ENCODE measurements at regions of chr10 and their contacts with region 1.

Region 1: DNA sequence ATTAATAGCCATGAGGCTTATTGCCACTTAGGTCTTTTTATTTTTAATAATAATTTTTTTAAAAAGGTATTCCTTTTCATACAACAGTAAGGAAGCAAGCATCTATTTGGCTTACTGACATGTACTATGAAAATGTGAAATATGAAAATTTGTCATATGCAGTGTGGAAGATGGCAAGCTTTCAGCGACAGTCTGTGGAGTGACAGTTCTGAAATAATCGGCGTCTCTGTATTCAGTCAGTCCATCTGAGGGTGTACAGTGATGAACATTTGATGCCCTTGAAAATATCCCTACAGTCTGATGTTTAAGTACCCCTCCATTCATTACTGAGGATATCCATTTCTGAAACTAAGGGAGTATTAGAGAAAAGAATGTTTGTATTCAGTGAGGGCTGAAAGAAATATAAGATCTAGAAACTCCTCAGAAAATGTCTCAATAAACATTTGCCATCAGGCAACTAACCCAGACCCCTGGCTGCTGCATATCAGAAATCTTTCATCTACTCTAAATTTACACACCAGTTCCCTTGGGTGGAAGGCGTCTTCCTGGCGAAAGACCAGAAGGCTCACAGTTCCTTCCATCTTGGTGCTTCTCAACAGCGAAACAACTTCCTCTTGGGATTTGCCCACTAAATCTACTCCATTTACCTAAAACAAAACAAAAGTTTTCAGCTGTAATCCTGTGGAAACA is 440.6 kb downstream of the PARD3 start:
- DNase-seq: no peak
- H3K4me3 ChIP-seq: no peak overlapping the region
- CTCF ChIP-seq: no peak

Region 2: GRCh38 chr10:34193931-34194626 is 180.4 kb before region 1 on chr10:
- in situ Hi-C with region 1: no loop called
- DNase-seq: peak; percentile 56
- H3K4me3 ChIP-seq: no peak overlapping the region
- CTCF ChIP-seq: no peak

Region 3: GRCh38 chr10:34262985-34263384 is 111.5 kb before region 1 on chr10:
- in situ Hi-C with region 1: no loop called
- DNase-seq: no peak
- H3K4me3 ChIP-seq: no peak overlapping the region
- CTCF ChIP-seq: peak; percentile 38

Region 4: DNA sequence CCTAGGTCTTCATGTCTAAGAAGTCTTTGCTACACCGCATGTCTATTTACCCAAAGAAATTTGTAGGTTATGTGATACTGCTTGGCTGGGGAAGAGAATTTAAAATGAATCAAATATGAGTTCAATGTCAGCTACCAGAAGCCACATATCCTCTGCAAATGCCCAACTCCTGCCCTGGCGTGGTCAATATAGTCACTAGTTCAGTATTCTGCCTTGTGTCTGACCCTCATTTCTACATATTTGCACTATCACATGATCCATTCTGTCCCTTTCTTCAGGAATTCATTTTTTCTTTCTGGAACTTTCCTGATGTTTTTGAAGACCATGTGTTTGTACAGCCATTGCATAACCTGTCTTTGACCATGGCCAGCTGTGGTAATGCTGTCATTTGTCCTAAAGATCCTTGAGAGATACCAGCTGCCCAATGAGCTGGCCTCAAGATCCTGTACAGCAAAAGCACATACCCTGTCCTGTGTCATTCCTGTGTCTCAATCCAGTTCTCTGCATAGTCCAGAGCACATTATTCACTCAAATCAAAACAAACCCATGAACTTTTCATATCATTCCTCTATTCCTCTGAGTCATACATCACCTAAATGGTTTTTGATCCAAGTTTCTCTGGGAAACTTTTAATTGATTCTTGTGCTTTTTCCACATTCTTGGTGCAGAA is 84.0 kb before region 1 on chr10:
- in situ Hi-C with region 1: loop called (anchors 5 kb)
- DNase-seq: peak; percentile 32
- H3K4me3 ChIP-seq: no peak overlapping the region
- CTCF ChIP-seq: no peak

Region 5: DNA sequence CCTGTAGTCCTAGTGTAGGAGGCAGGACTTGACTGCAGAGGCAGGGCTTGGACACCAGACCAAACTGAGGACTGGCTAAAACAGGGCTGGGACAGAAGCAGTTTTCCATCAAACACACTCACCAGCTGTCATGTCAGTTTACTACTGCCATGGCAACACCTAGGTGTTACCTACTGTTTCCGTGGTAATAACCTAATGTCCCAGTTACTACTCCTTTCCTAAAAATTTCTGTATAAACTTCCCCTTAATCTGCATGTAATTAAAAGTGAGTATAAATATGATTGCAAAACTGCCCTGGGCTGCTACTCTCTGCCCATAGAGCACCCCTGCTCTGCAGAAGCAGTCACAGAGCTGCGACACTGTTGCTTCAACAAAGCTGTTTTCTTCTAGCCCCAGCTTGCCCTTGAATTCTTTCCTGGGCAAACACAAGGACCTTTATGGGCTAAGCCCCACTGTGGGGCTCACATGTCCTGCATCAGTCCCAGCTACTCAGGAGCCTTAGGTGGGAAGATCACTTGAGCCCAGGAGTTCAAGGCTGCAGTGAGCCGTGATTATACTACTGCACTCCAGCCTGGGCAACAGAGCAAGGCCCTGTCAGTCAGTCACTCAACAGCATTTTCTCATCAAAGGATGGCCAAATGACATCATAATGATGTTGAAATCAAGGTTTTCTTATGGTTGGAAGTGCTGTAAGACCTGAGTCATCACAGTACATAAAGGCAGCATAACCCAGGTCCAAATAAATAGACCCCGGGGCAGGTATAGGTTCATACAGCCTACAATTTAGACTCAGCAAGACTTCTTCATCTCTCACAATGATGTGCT is 99.3 kb after region 1 on chr10:
- in situ Hi-C with region 1: no loop called
- DNase-seq: no peak
- H3K4me3 ChIP-seq: no peak overlapping the region
- CTCF ChIP-seq: no peak

Region 6: GRCh38 chr10:34599026-34599795 is 224.7 kb after region 1 on chr10:
- in situ Hi-C with region 1: no loop called
- DNase-seq: no peak
- H3K4me3 ChIP-seq: no peak overlapping the region
- CTCF ChIP-seq: no peak

Measured in astrocyte of the cerebellum (primary cell).